ENCODE measurements at regions of chr17 and their contacts with region 1.

Region 1: DNA sequence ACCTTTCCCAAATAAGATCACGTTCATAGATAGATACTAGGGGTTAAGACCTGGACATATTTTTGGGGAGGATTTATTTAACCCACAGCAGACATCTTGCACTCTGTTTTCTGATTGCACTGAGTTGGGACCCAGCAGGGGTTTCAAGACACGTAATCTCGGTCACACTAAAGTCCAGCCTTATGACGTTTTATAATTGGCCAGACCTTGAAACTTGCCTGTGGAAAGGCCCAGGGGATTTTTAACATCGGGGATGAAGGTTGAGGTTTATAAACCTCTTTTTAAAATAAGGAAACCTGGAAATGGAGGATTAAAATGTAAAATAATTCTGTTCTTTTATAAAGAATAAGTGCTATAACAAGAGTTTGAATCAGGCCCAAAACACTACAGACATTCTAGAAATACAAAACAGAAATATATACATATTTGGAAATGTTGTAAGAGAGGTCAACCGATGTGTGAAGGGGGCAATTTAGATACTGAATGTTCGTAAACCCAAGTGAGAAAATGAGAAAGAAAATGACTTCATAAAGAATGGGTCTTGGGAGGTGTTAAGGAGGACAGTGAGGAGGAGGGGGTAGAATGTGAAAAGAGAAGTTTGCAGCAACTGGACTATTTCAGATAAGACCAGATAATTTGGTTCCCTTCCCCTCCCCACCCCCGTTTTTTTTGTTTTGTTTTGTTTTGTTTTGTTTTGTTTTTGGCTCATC is 61.1 kb upstream of the NOL11 start:
- DNase-seq: peak; percentile 51
- ATAC-seq: peak; percentile 86
- H3K4me3 ChIP-seq: no peak overlapping the region
- H3K27ac ChIP-seq: peak overlapping the region; percentile 88
- H3K4me1 ChIP-seq: peaks cover 42% of the 10 kb centered on the region
- H3K27me3 ChIP-seq: no peaks in the 10 kb centered on the region
- CTCF ChIP-seq: no peak
- EP300 ChIP-seq: peak; percentile 42 to 66; a peak in 2 of 4 replicates
- POLR2A ChIP-seq: no peak
- RAD21 ChIP-seq: peak; percentile 5; the same call in 1 of the 2 replicates

Region 2: GRCh38 chr17:67682196-67682595 is 25.5 kb after region 1 on chr17:
- CTCF ChIA-PET with region 1: interaction called, 75 read pairs
- POLR2A ChIA-PET with region 1: interaction called, 17 read pairs
- RAD21 ChIA-PET with region 1: interaction called, 80 read pairs
- SMC1A ChIA-PET with region 1: interaction called, 101 read pairs
- in situ Hi-C with region 1: no loop called
- intact Hi-C with region 1: loop called (anchors 1 kb)
- DNase-seq: no peak
- ATAC-seq: no peak
- H3K4me3 ChIP-seq: no peak overlapping the region
- H3K27ac ChIP-seq: no peak overlapping the region
- H3K4me1 ChIP-seq: peaks cover 24% of the 10 kb centered on the region
- H3K27me3 ChIP-seq: no peaks in the 10 kb centered on the region
- CTCF ChIP-seq: no peak
- EP300 ChIP-seq: no peak
- POLR2A ChIP-seq: no peak
- RAD21 ChIP-seq: no peak

Region 3: GRCh38 chr17:67779098-67779672 is 122.5 kb after region 1 on chr17:
- CTCF ChIA-PET with region 1: no interaction called
- POLR2A ChIA-PET with region 1: no interaction called
- RAD21 ChIA-PET with region 1: no interaction called
- SMC1A ChIA-PET with region 1: no interaction called
- in situ Hi-C with region 1: no loop called
- intact Hi-C with region 1: no loop called
- DNase-seq: no peak
- ATAC-seq: peak; percentile 94
- H3K4me3 ChIP-seq: no peak overlapping the region
- H3K27ac ChIP-seq: no peak overlapping the region
- H3K4me1 ChIP-seq: no peaks in the 10 kb centered on the region
- H3K27me3 ChIP-seq: no peaks in the 10 kb centered on the region; a peak in 1 of 4 replicates
- CTCF ChIP-seq: peak; percentile 37 to 76 (median 65)
- EP300 ChIP-seq: no peak
- POLR2A ChIP-seq: no peak
- RAD21 ChIP-seq: peak; percentile 62

Region 4: GRCh38 chr17:67818110-67819002 is 161.7 kb after region 1 on chr17:
- CTCF ChIA-PET with region 1: interaction called, 3 read pairs
- POLR2A ChIA-PET with region 1: no interaction called
- RAD21 ChIA-PET with region 1: interaction called, 6 read pairs
- SMC1A ChIA-PET with region 1: no interaction called
- in situ Hi-C with region 1: no loop called
- intact Hi-C with region 1: loop called (anchors 10 kb)
- DNase-seq: peak; percentile 88
- ATAC-seq: peak; percentile 76
- H3K4me3 ChIP-seq: no peak overlapping the region
- H3K27ac ChIP-seq: peak overlapping the region; percentile 45; the same call in 1 of the 2 replicates
- H3K4me1 ChIP-seq: peaks cover 44% of the 10 kb centered on the region
- H3K27me3 ChIP-seq: no peaks in the 10 kb centered on the region
- CTCF ChIP-seq: no peak
- EP300 ChIP-seq: peak; percentile 49 to 72; a peak in 2 of 4 replicates
- POLR2A ChIP-seq: no peak
- RAD21 ChIP-seq: no peak

Measured in GM12878 (cell line).